Heart right ventricle (tissue), 16 donors: ENCODE measurements at regions of chrX and their contacts with region 1.

Region 1: GRCh38 chrX:108064613-108065012 is 19.7 kb downstream of the VSIG1 start:
- DNase-seq: no peak
- ATAC-seq: no peak
- H3K4me3 ChIP-seq: no peak overlapping the region
- H3K27ac ChIP-seq: no peak overlapping the region
- H3K4me1 ChIP-seq: no peaks in the 10 kb centered on the region
- H3K27me3 ChIP-seq: peaks cover 0 to 55% (median 0%) of the 10 kb centered on the region in 7 donors
- CTCF ChIP-seq: no peak

Region 2: GRCh38 chrX:107747596-107748161 is 316.9 kb before region 1 on chrX:
- intact Hi-C with region 1: no loop called
- DNase-seq: peak in 1 of 2 donors; percentile 37
- ATAC-seq: peak; percentile 44 to 90 (median 80)
- H3K4me3 ChIP-seq: no peak overlapping the region
- H3K27ac ChIP-seq: peak overlapping the region; percentile 40 to 83 (median 76)
- H3K4me1 ChIP-seq: peaks cover 12 to 74% (median 46%) of the 10 kb centered on the region in 9 donors
- H3K27me3 ChIP-seq: peaks cover 0 to 25% (median 0%) of the 10 kb centered on the region in 7 donors
- CTCF ChIP-seq: no peak

Region 3: GRCh38 chrX:108029928-108030711 is 34.5 kb before region 1 on chrX:
- intact Hi-C with region 1: loop called in 1 of 10 experiments (anchors 5 kb)
- DNase-seq: no peak
- ATAC-seq: no peak
- H3K4me3 ChIP-seq: no peak overlapping the region
- H3K27ac ChIP-seq: no peak overlapping the region
- H3K4me1 ChIP-seq: no peaks in the 10 kb centered on the region
- H3K27me3 ChIP-seq: peaks cover 0 to 77% (median 0%) of the 10 kb centered on the region in 7 donors
- CTCF ChIP-seq: no peak